ENCODE measurements at regions of chr15 and their contacts with region 1.

Region 1: DNA sequence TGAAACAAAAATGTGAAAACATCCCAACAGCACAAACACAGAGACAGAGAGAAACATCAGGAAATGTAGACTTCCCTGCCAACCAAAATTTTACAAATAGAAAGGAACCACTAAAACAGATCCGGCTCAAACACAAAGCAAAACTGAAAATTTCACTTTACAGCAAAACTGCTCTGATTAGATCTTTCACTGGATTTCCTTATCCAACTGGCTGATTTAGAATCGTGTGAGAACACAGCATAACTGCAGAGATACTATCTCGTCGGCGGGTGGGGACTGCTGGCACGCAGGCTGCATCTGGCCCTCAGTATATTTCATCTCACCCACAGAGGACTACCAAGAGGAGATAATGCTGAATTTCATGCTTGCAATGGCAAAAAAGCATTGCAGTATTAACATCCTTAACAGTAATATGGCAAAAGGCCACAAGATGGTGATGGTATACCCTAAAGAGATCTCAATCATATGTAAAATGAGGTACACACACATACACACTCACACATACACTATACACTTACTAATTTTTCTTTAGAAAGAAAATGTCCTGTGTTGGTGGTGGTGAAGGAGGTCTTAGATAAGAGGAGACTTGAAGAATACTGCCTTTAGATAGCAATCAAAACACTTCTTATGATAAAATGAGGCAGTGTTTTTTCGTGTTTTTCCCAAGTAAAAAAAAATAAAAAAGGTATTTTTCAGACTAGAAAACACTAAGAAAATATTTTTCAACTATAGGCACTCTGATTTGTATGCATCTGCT is 10.6 kb upstream of the LEO1 start:
- H3K4me3 ChIP-seq: no peak overlapping the region
- H3K27ac ChIP-seq: peak overlapping the region; percentile 35; the same call in 1 of the 2 replicates
- H3K4me1 ChIP-seq: peaks cover 2% of the 10 kb centered on the region; the same call in 1 of the 2 replicates
- CTCF ChIP-seq: peak; percentile 64

Region 2: GRCh38 chr15:52139599-52140491 is 157.7 kb after region 1 on chr15:
- CTCF ChIA-PET with region 1: interaction called, 10 read pairs
- POLR2A ChIA-PET with region 1: no interaction called
- H3K4me3 ChIP-seq: no peak overlapping the region
- H3K27ac ChIP-seq: no peak overlapping the region
- H3K4me1 ChIP-seq: no peaks in the 10 kb centered on the region
- CTCF ChIP-seq: peak; percentile 45; the same call in 1 of the 2 replicates

Region 3: DNA sequence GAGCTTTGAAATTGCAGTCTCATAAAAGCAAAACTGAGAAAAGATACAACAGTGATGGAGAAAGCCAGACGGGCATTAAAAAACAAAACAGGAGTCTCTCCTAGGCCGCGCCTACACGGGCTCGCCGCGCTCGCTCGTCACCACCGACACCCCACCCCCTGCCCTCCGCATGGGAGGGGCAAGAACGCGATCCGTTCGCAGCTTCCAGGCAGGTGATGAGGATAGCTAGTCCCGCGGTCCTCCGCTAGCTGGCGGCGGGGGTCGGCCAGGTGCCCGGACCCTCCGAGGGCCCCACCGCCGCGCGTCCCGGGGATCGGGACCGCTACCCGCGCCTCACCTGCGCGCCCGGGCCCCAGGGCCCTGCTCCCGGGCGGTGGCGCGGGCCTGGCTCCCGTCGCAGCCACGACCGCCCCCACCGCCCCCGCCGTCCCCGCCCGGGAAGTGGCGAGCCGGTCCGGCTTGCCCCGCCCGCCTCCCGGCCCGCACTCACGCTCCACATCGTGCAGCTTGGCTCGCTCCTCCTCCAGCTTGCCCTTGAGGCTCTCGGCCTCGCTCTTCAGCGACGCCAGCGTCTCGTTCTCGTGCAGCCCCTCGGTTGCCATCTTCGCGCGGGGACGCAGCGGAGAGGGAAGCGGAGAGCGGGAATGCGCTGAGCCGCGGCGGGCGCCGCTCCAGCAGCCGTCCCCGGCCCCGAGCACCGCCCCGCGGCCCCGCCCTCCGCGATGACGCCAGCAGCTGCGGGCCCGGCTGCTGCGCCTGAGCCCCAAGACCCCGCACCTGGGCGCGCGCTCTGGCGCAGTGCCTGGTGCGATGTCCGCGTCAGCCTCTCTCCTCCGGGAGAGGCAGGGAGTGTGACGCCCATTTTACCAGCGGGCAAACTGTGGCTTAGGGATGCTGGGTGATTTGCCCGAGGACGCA is 197.3 kb after region 1 on chr15:
- CTCF ChIA-PET with region 1: no interaction called
- POLR2A ChIA-PET with region 1: no interaction called
- H3K4me3 ChIP-seq: peak overlapping the region; percentile 83
- H3K27ac ChIP-seq: peak overlapping the region; percentile 58; the same call in 1 of the 2 replicates
- H3K4me1 ChIP-seq: no peaks in the 10 kb centered on the region
- CTCF ChIP-seq: no peak